Stomach (tissue), 19 donors: ENCODE measurements at regions of chr12 and their contacts with region 1.

Region 1: GRCh38 chr12:64610149-64610678 is at the start of gene RASSF3:
- DNase-seq: peak; percentile 82 to 92
- H3K4me3 ChIP-seq: peak within 1 kb of the TSS; percentile 81 to 97 (median 92)
- H3K27ac ChIP-seq: peak within 1 kb of the TSS; percentile 93 to 99 (median 97)
- H3K4me1 ChIP-seq: peaks cover 0 to 53% (median 26%) of the 10 kb centered on the region in 4 donors
- H3K27me3 ChIP-seq: no peaks in the 10 kb centered on the region
- CTCF ChIP-seq: no peak
- EP300 ChIP-seq: no peak
- POLR2A ChIP-seq: peak in 1 of 4 donors; percentile 31
- total RNA-seq, gene RASSF3: 34.4 to 109 (median 61.0) TPM

Region 2: GRCh38 chr12:64522316-64522715 is 87.9 kb before region 1 on chr12:
- intact Hi-C with region 1: no loop called
- DNase-seq: no peak
- H3K4me3 ChIP-seq: no peak overlapping the region
- H3K27ac ChIP-seq: no peak overlapping the region
- H3K4me1 ChIP-seq: no peaks in the 10 kb centered on the region
- H3K27me3 ChIP-seq: no peaks in the 10 kb centered on the region
- CTCF ChIP-seq: no peak
- EP300 ChIP-seq: no peak
- POLR2A ChIP-seq: no peak

Region 3: DNA sequence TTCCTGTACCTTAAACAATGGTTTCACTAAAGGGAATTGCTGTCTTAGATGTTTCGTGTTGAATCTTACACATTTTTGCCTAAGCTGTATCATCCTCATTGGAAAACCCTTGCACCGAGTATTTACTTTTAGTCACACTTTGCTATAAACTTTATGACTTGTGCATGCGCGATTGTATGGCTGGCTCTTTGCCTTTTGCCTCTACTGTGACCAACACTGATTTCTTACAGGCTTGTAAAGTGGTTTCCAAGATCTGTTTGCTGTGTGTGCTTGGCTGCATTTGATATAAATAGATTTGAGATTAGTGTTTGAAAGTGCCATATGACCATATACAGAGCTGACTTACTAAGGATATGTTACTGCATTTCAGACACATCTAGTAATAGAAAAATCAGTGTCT is 40.5 kb after region 1 on chr12:
- intact Hi-C with region 1: no loop called
- DNase-seq: peak; percentile 59 to 77
- H3K4me3 ChIP-seq: no peak overlapping the region
- H3K27ac ChIP-seq: peak overlapping the region; percentile 58 to 77 (median 76)
- H3K4me1 ChIP-seq: peaks cover 21 to 95% (median 65%) of the 10 kb centered on the region in 4 donors
- H3K27me3 ChIP-seq: no peaks in the 10 kb centered on the region
- CTCF ChIP-seq: no peak
- EP300 ChIP-seq: no peak
- POLR2A ChIP-seq: no peak

Region 4: DNA sequence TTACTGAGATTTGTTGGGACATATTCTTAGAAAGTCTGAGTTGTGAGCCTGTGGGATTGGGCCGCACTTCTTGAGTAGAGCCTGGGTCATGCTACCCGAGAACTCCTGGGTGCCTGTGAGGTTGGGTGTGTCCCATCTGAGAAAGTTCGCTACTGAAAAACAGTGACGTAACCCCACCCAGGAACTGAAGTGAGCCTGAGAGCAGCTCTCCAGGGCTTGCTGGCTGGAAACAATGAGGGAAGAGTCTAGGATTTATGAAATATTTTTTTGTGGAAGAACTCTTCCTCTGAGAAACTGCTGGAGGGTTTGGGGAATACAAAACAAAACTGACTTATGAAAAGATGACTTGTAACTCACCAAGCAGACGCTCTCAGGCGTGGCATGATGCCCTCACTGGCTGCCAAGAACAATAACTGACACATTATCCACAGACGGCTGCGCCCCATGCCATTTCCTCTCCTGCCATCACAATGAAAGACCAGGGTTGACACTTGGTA is 69.3 kb after region 1 on chr12:
- intact Hi-C with region 1: loop called (anchors 10 kb)
- DNase-seq: peak; percentile 71 to 89
- H3K4me3 ChIP-seq: peak overlapping the region in 1 of 4 donors; percentile 17
- H3K27ac ChIP-seq: peak overlapping the region; percentile 81 to 91 (median 86)
- H3K4me1 ChIP-seq: peaks cover 39 to 100% (median 83%) of the 10 kb centered on the region in 4 donors
- H3K27me3 ChIP-seq: no peaks in the 10 kb centered on the region
- CTCF ChIP-seq: no peak
- EP300 ChIP-seq: no peak
- POLR2A ChIP-seq: no peak